PC-3 (cell line): ENCODE measurements at regions of chr16 and their contacts with region 1.

Region 1: GRCh38 chr16:10509534-10510025 is 70.8 kb downstream of the EMP2 start:
- DNase-seq: peak; percentile 78
- ATAC-seq: peak; percentile 89
- H3K4me3 ChIP-seq: no peak overlapping the region
- H3K27ac ChIP-seq: no peak overlapping the region
- H3K4me1 ChIP-seq: peaks cover 18% of the 10 kb centered on the region
- H3K27me3 ChIP-seq: no peaks in the 10 kb centered on the region
- CTCF ChIP-seq: peak; percentile 74

Region 2: DNA sequence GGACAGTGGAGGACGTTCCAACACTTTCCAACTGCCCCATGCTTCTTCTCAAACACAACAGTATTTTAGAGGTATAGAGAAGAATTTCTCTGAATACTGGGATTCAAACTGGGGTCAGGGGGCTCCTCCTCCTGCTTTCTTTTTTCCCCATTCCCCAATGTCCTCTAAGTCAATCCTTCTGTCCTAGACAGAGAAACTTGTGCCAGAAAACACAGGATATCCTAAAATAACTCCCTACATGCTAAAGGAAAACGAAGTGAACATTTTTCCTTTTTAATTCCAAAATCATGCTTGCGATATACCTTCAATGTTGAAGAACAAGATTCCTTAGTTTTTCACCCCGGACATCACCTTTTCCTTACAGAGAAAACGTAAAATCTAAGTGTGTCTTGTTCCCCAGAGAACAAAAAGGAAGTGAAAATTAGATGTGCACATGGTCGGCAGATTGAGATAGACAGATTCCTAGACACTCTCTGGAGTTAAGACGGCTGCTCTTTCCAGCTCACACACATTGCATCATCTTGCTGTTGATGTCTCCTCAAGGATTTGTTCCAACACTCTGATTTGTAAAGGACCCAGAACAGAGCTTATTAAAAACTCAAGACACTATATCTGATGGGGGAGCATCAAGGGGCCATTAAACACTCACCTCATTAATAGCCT is 555.5 kb before region 1 on chr16:
- CTCF ChIA-PET with region 1: no interaction called
- POLR2A ChIA-PET with region 1: no interaction called
- intact Hi-C with region 1: no loop called
- DNase-seq: no peak
- ATAC-seq: no peak
- H3K4me3 ChIP-seq: no peak overlapping the region
- H3K27ac ChIP-seq: no peak overlapping the region
- H3K4me1 ChIP-seq: no peaks in the 10 kb centered on the region
- H3K27me3 ChIP-seq: peaks cover 27% of the 10 kb centered on the region
- CTCF ChIP-seq: no peak

Region 3: DNA sequence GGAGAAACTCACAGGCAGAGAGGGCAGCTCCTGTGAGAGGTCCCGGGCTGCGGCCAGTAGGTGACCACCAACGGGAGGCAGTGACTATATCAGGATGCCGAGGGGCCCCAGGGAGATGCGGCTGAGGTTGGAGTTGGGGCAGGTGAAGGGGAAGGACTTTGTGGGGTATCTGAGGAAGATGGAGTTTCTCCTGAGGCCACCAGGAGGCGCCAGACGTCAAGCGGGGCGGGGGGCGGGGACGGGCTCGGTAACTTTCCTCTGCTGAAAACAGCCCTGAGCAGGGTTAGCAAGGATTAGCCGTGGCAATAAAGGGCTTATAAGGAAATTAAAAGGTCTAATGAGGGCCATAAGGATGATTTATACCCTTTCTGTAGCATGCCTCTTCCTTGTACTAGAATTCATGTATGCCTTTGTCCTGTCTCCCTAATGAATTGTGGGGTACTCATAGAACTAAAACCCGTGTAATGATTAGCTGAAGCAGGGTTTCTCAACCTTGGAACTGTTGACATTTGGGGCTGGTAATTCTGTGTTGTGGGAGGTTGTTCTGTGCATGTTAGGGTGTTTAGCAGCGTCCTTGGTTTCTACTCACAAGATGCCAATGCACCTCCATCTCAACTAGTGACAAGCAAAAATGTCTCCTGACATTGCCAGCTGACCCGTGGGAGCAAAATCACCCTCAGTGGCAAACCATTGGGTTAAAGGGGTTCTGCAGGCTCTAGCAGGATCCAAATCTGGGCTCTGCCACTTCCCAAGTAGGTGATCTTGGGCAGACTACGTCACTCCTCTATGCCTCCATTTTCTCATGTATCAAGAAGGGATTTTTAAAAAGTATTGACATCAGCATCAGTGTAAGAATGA is 252.6 kb before region 1 on chr16:
- CTCF ChIA-PET with region 1: no interaction called
- POLR2A ChIA-PET with region 1: no interaction called
- intact Hi-C with region 1: loop called (anchors 2 kb)
- DNase-seq: peak; percentile 8
- ATAC-seq: no peak; the same call in 1 of the 2 replicates
- H3K4me3 ChIP-seq: no peak overlapping the region
- H3K27ac ChIP-seq: no peak overlapping the region
- H3K4me1 ChIP-seq: no peaks in the 10 kb centered on the region
- H3K27me3 ChIP-seq: no peaks in the 10 kb centered on the region; the same call in 1 of the 2 replicates
- CTCF ChIP-seq: peak; percentile 50; the same call in 1 of the 2 replicates

Region 4: GRCh38 chr16:10314811-10315210 is 194.8 kb before region 1 on chr16:
- CTCF ChIA-PET with region 1: interaction called, 7 read pairs
- POLR2A ChIA-PET with region 1: interaction called, 3 read pairs
- intact Hi-C with region 1: loop called (anchors 1 kb)
- DNase-seq: peak; percentile 36
- ATAC-seq: peak; percentile 27; the same call in 1 of the 2 replicates
- H3K4me3 ChIP-seq: no peak overlapping the region
- H3K27ac ChIP-seq: no peak overlapping the region
- H3K4me1 ChIP-seq: no peaks in the 10 kb centered on the region
- H3K27me3 ChIP-seq: no peaks in the 10 kb centered on the region
- CTCF ChIP-seq: peak; percentile 48

Region 5: DNA sequence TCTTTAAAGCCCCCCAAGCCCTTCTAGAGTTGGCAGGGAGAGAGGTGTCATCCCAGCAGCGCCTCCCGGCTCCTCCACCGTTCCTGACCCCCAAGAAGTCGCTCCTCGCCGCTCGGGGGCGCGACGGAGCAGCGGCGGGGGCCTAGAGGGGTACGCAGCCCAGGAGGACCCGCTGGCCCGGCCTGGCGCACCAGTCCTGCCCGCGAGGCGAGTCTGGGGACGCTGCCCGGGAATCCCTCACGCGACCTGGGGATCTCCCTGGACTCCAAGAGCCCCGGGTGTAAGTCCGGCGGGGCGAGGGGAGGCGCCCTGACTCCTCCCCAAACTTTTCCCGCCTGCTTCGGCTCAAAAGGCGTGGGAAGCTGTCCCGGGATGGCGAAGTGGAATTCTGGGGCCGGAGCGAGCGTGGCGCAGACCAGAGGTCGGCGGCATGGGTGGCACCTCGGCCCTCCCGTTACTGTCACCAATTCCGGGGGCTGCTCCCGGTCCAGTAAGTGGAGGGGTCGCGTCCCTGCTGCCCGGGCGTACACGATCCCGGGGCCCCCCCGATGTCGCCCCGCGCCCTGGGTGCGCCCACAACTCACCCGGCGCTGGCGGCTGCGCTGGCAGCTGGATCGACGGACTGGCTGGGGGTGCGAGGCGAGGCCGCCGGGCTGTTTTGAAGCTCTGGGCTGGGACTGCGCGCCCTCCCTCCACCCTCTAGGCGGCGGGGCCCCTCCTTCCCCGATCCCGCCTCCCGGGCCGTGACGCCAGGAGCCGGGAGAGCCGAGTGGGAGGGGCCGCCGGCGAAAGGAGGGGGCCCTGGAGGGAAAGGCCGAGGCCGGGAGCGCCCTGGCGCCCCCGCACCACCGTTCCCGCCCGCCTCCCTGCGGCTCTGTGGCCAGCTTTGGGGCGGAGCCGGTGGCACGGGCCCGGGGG is 70.6 kb after region 1 on chr16 and contains the start of gene EMP2:
- CTCF ChIA-PET with region 1: no interaction called
- POLR2A ChIA-PET with region 1: no interaction called
- intact Hi-C with region 1: loop called (anchors 5 kb)
- DNase-seq: peak; percentile 76
- ATAC-seq: peak; percentile 66
- H3K4me3 ChIP-seq: peak within 1 kb of the TSS; percentile 89
- H3K27ac ChIP-seq: peak within 1 kb of the TSS; percentile 84
- H3K4me1 ChIP-seq: peaks cover 48% of the 10 kb centered on the region
- H3K27me3 ChIP-seq: no peaks in the 10 kb centered on the region
- CTCF ChIP-seq: peak; percentile 67
- total RNA-seq, gene EMP2: 33.9 and 38.7 TPM in 2 replicates

Region 6: DNA sequence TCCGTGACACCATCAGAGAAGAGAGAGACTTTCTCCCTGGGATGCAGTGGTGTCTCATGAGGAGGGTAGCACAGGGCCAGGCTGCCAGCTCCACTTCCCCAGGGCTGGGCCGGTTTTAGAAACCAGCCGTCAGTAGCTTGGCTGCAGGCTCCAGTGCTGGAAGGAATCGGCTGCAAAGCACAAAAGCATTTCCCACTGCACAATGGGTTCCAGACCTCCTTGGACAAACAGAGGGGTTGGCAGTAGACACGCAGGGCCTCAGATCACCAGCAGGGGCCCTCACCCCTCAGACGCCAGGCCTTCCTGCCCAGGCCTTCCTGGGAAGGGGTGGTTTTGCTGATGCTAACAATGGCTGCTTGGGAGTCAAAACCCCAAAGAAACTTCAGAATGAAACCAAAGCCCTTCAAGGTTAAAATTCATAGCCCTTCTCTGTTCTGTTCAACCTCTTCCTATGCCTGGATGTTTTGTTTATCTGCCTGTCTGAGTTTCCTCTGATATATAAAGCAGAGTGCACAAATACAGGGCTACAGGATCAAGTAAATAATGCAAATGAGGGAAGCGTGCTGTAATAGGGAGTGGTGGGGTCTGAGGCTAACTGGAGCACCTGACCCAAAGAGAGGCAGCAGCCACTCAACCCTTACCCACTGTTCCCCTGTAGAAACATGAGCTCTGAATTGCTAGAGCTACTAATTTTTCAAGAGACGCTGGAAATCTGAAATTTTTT is 158.9 kb after region 1 on chr16:
- CTCF ChIA-PET with region 1: no interaction called
- POLR2A ChIA-PET with region 1: no interaction called
- intact Hi-C with region 1: loop called (anchors 5 kb)
- DNase-seq: peak; percentile 45
- ATAC-seq: peak; percentile 88
- H3K4me3 ChIP-seq: no peak overlapping the region
- H3K27ac ChIP-seq: no peak overlapping the region
- H3K4me1 ChIP-seq: no peaks in the 10 kb centered on the region
- H3K27me3 ChIP-seq: no peaks in the 10 kb centered on the region
- CTCF ChIP-seq: peak; percentile 60

Region 7: DNA sequence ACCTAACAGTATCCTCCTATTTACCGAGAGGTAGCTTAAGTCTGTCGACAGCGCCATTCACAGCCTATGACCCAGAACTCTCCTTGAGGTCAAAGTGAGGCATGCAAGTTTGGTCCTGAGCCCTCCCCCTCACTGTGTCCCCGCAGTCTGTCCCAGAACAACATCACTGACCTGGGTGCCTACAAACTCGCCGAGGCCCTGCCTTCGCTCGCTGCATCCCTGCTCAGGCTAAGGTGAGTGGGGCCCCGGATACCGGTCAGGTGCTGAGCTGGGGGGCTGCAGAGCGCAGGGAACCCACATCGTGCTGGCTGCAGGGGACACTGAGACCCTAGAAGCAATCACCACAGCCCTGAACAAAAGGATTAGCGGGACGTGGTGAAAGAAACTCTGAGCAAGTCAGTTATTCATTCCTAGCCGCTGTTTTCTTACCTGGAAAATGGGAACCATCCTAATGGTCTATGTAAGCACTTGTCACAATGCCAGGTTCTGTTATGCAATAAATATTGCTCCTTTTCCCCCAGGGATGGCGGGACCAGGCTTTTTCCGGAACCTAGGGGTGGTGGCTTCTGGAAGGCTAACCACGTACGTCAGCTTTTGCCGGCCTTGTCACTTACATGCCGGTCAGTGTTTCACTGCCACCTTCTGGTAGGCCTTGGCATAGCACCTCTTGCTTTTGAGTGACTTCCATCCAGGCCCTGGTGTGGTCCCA is 408.9 kb after region 1 on chr16:
- CTCF ChIA-PET with region 1: no interaction called
- POLR2A ChIA-PET with region 1: no interaction called
- intact Hi-C with region 1: loop called (anchors 10 kb)
- DNase-seq: peak; percentile 95
- ATAC-seq: peak; percentile 95
- H3K4me3 ChIP-seq: no peak overlapping the region
- H3K27ac ChIP-seq: no peak overlapping the region
- H3K4me1 ChIP-seq: no peaks in the 10 kb centered on the region
- H3K27me3 ChIP-seq: no peaks in the 10 kb centered on the region
- CTCF ChIP-seq: peak; percentile 82